PC-9 (cell line): ENCODE measurements at regions of chr1 and their contacts with region 1.

Region 1: GRCh38 chr1:20212685-20213331 is 26.5 kb upstream of the PLA2G2C start:
- DNase-seq: peak; percentile 90 to 92
- H3K4me3 ChIP-seq: peak overlapping the region; percentile 47; the same call in 1 of the 2 replicates
- H3K27ac ChIP-seq: peak overlapping the region; percentile 99
- H3K4me1 ChIP-seq: peaks cover 58% of the 10 kb centered on the region
- H3K27me3 ChIP-seq: no peaks in the 10 kb centered on the region
- CTCF ChIP-seq: peak; percentile 91

Region 2: DNA sequence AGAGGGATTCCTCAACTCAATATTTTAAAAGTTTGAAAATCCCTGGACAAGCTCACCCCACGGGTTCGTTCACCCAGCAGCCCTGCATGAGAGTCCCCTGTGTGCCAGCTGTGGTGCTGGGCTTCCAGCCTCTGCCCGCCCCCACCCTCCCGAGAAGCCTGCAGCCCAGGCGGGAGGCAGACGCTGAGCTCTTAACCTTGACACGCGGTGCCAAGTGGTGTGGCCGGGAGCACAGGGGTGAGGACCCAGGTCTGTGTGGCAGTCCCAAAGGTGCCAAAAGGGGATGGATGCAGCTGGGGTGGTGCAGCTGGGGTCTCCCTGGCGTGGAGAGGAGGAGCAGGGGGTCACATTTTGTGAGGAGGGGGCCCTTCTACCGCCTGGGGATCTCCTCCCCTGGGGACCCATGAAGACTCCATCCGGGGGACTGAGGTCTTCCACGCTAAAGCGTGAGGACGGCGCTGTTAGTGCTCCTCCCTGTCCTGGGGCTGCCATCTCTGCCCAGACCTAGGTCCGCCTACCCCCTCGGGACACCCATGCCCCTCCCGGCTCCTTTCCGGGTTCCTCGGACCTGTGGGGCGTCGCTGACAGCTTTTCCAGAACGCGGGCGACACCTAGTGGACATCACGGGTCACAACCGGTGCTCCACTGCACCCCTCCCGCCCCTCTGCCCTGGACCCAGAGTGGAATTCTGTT is 60.8 kb before region 1 on chr1:
- CTCF ChIA-PET with region 1: interaction called, 6 read pairs
- POLR2A ChIA-PET with region 1: no interaction called
- intact Hi-C with region 1: loop called (anchors 1 kb)
- DNase-seq: peak; percentile 63 to 83
- H3K4me3 ChIP-seq: peak overlapping the region; percentile 21; the same call in 1 of the 2 replicates
- H3K27ac ChIP-seq: peak overlapping the region; percentile 91
- H3K4me1 ChIP-seq: peaks cover 20% of the 10 kb centered on the region
- H3K27me3 ChIP-seq: no peaks in the 10 kb centered on the region
- CTCF ChIP-seq: peak; percentile 87

Region 3: GRCh38 chr1:20271498-20272400 is 58.9 kb after region 1 on chr1:
- CTCF ChIA-PET with region 1: interaction called, 20 read pairs
- POLR2A ChIA-PET with region 1: no interaction called
- intact Hi-C with region 1: no loop called
- DNase-seq: no peak
- H3K4me3 ChIP-seq: no peak overlapping the region
- H3K27ac ChIP-seq: no peak overlapping the region
- H3K4me1 ChIP-seq: 0 out of 2 replicates have a peak, but pooled peaks cover 7% of the 10 kb centered on the region
- H3K27me3 ChIP-seq: no peaks in the 10 kb centered on the region
- CTCF ChIP-seq: no peak

Region 4: GRCh38 chr1:20355831-20356735 is 143.3 kb after region 1 on chr1:
- CTCF ChIA-PET with region 1: interaction called, 23 read pairs
- POLR2A ChIA-PET with region 1: interaction called, 5 read pairs
- intact Hi-C with region 1: loop called (anchors 1 kb)
- DNase-seq: peak; percentile 83 to 85
- H3K4me3 ChIP-seq: no peak overlapping the region
- H3K27ac ChIP-seq: peak overlapping the region; percentile 82
- H3K4me1 ChIP-seq: peaks cover 58% of the 10 kb centered on the region
- H3K27me3 ChIP-seq: no peaks in the 10 kb centered on the region
- CTCF ChIP-seq: no peak

Region 5: DNA sequence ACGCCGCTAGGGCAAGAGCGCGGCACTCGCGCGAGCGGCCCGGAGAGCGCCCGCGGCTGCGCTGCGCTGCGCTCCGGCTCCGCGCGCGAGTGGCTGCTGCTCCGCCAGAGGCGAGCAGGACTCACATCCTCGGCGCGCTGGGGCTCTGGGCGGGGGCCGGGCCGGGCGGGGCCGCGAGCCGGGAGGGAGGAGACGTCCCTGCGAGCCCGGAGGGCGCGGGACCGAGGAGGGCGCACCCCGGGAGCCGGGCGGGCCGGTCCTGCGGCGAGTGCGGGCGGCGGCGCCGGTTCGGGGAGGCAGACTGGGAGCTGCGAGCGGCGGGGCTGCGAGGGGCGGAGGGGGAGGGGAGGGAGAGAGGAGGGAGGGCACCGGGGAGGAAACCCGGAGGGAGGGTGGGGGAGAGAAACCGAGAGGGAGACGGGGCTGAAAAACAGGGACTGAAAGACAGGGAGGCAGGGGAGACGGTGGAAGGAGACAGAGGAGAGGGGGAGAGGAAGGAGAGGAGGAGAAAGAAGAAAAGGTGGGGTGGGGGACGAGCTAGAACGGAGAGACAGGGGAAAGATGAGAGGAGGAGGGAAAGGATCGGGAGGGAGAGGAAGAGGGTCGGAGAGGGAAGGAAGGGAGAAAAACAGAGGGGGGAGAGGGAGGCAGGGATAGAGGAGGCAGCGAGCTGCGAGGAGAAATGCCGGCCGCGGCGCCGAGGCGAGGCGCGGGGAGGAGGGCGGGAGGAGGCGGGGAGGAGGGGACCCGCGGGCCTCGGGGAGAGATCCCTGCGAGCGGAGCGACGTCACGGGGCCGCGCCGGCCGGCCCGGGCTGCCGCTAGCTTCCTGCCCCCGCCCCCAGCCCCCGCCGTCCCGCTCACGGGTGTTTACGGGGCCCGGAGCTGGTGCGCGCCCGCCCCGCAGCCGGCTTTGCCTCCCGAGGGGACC is 273.0 kb after region 1 on chr1 and contains the start of gene CAMK2N1:
- CTCF ChIA-PET with region 1: no interaction called
- POLR2A ChIA-PET with region 1: interaction called, 45 read pairs
- intact Hi-C with region 1: no loop called
- DNase-seq: peak; percentile 47 to 69
- H3K4me3 ChIP-seq: peak within 1 kb of the TSS; percentile 87
- H3K27ac ChIP-seq: peak within 1 kb of the TSS; percentile 87
- H3K4me1 ChIP-seq: peaks cover 33% of the 10 kb centered on the region
- H3K27me3 ChIP-seq: no peaks in the 10 kb centered on the region
- CTCF ChIP-seq: no peak
- total RNA-seq, gene CAMK2N1: 34.9 and 44.6 TPM in 2 replicates